Calu3 (cell line): ENCODE measurements at regions of chr10 and their contacts with region 1.

Region 1: GRCh38 chr10:103578782-103579382 is 85.4 kb downstream of the NEURL1 start:
- DNase-seq: peak; percentile 51
- H3K4me3 Mint-ChIP-seq: no peak overlapping the region
- H3K27ac Mint-ChIP-seq: no peak overlapping the region
- H3K4me1 Mint-ChIP-seq: peaks cover 19% of the 10 kb centered on the region
- H3K27me3 Mint-ChIP-seq: peaks cover 24% of the 10 kb centered on the region
- CTCF ChIP-seq: no peak

Region 2: GRCh38 chr10:103504181-103504783 is 74.6 kb before region 1 on chr10:
- CTCF ChIA-PET with region 1: no interaction called
- intact Hi-C with region 1: loop called (anchors 10 kb)
- DNase-seq: peak; percentile 59
- H3K4me3 Mint-ChIP-seq: no peak overlapping the region
- H3K27ac Mint-ChIP-seq: peak overlapping the region; percentile 50
- H3K4me1 Mint-ChIP-seq: peaks cover 18% of the 10 kb centered on the region
- H3K27me3 Mint-ChIP-seq: peaks cover 59% of the 10 kb centered on the region
- CTCF ChIP-seq: no peak

Region 3: GRCh38 chr10:103685880-103686669 is 107.2 kb after region 1 on chr10:
- CTCF ChIA-PET with region 1: interaction called, 18 read pairs
- intact Hi-C with region 1: no loop called
- DNase-seq: peak; percentile 78
- H3K4me3 Mint-ChIP-seq: no peak overlapping the region
- H3K27ac Mint-ChIP-seq: no peak overlapping the region
- H3K4me1 Mint-ChIP-seq: peaks cover 11% of the 10 kb centered on the region
- H3K27me3 Mint-ChIP-seq: peaks cover 11% of the 10 kb centered on the region
- CTCF ChIP-seq: peak; percentile 81